CD4-positive, alpha-beta memory T cell (primary cell): ENCODE measurements at regions of chr14 and their contacts with region 1.

Region 1: GRCh38 chr14:55579724-55580469 is at the start of gene KTN1:
- DNase-seq: peak; percentile 84 to 90 (median 87)
- H3K4me3 ChIP-seq: peak within 1 kb of the TSS; percentile 49 to 87
- H3K4me3 Mint-ChIP-seq: peak within 1 kb of the TSS; percentile 93 to 96 (median 94)
- H3K27ac ChIP-seq: peak within 1 kb of the TSS; percentile 64
- H3K27ac Mint-ChIP-seq: peak within 1 kb of the TSS; percentile 94 to 97 (median 95)
- H3K4me1 ChIP-seq: peaks cover 49% of the 10 kb centered on the region
- H3K4me1 Mint-ChIP-seq: peaks cover 24 to 28% (median 27%) of the 10 kb centered on the region in 4 donors
- H3K27me3 ChIP-seq: no peaks in the 10 kb centered on the region
- H3K27me3 Mint-ChIP-seq: no peaks in the 10 kb centered on the region
- total RNA-seq, gene KTN1: 126 to 133 TPM

Region 2: GRCh38 chr14:55662752-55663151 is 82.9 kb after region 1 on chr14:
- CTCF ChIA-PET with region 1: no interaction called
- POLR2A ChIA-PET with region 1: interaction called, 3 read pairs
- intact Hi-C with region 1: loop called (anchors 5 kb)
- DNase-seq: no peak
- H3K4me3 ChIP-seq: no peak overlapping the region
- H3K4me3 Mint-ChIP-seq: no peak overlapping the region
- H3K27ac ChIP-seq: no peak overlapping the region
- H3K27ac Mint-ChIP-seq: peak overlapping the region in 1 of 7 donors; percentile 27
- H3K4me1 ChIP-seq: peaks cover 10% of the 10 kb centered on the region
- H3K4me1 Mint-ChIP-seq: peaks cover 14 to 27% (median 23%) of the 10 kb centered on the region in 4 donors
- H3K27me3 ChIP-seq: no peaks in the 10 kb centered on the region
- H3K27me3 Mint-ChIP-seq: no peaks in the 10 kb centered on the region

Region 3: GRCh38 chr14:56579345-56580220 is 999.7 kb after region 1 on chr14 and contains the start of gene TMEM260:
- CTCF ChIA-PET with region 1: no interaction called
- POLR2A ChIA-PET with region 1: no interaction called
- intact Hi-C with region 1: loop called (anchors 5 kb)
- DNase-seq: peak; percentile 90 to 94 (median 93)
- H3K4me3 ChIP-seq: peak within 1 kb of the TSS; percentile 92 to 94
- H3K4me3 Mint-ChIP-seq: peak within 1 kb of the TSS; percentile 90 to 99 (median 92)
- H3K27ac ChIP-seq: peak within 1 kb of the TSS; percentile 83
- H3K27ac Mint-ChIP-seq: peak within 1 kb of the TSS in 6 of 7 donors; percentile 91 to 99 (median 97)
- H3K4me1 ChIP-seq: peaks cover 41% of the 10 kb centered on the region
- H3K4me1 Mint-ChIP-seq: peaks cover 30 to 48% (median 35%) of the 10 kb centered on the region in 4 donors
- H3K27me3 ChIP-seq: no peaks in the 10 kb centered on the region
- H3K27me3 Mint-ChIP-seq: no peaks in the 10 kb centered on the region
- total RNA-seq, gene TMEM260: 33.6 to 37.0 TPM

Region 4: GRCh38 chr14:57390028-57390805 is 1810.3 kb after region 1 on chr14 and contains the start of gene NAA30:
- CTCF ChIA-PET with region 1: no interaction called
- POLR2A ChIA-PET with region 1: interaction called, 3 read pairs
- intact Hi-C with region 1: loop called (anchors 2 kb)
- DNase-seq: peak; percentile 93 to 98 (median 96)
- H3K4me3 ChIP-seq: peak within 1 kb of the TSS; percentile 50 to 85
- H3K4me3 Mint-ChIP-seq: peak within 1 kb of the TSS; percentile 90 to 98 (median 94)
- H3K27ac ChIP-seq: peak within 1 kb of the TSS; percentile 83
- H3K27ac Mint-ChIP-seq: peak within 1 kb of the TSS; percentile 88 to 97 (median 96)
- H3K4me1 ChIP-seq: peaks cover 42% of the 10 kb centered on the region
- H3K4me1 Mint-ChIP-seq: peaks cover 30 to 53% (median 42%) of the 10 kb centered on the region in 4 donors
- H3K27me3 ChIP-seq: no peaks in the 10 kb centered on the region
- H3K27me3 Mint-ChIP-seq: no peaks in the 10 kb centered on the region
- total RNA-seq, gene NAA30: 18.6 to 21.8 TPM